ENCODE measurements at regions of chr5 and their contacts with region 1.

Region 1: DNA sequence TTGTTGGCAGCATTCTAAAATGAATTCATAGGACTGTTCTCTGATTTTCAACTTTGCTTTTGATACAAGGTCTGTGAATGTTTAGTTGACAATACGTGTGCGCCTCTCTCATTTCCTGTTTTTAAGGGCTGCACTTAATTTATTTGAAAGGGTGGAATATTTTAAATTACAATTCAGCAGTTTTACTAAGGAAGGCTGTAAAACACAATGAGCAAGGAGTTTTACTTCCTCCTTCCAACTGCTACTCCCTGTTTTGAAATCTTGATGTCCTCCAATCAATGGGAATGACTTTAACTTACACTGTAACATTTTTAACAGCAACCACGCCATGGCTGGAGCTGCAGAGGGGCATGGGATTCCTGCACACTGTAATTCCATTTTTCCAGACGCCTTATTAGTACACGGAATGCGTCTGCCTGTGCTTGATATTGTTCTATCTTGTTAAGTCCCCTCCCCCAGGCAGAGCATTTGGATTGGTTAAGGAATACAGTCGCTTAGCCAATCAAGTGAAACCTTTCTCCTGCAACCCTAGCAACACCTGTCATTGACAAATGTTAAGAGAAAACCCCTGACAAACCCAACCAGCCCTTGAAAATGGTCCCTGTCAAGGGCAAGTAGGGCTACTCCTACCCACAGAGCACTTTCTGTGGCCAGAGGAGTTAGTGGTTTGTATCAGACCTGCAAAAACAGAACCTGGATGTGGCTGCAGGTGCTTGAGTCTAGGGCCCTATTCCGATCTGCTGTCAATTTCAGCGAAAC is 12.5 kb upstream of the ZSWIM6 start:
- ATAC-seq: peak in 6 of 8 experiments; percentile 53 to 96 (median 85)
- H3K4me3 ChIP-seq: no peak overlapping the region
- H3K27ac ChIP-seq: no peak overlapping the region
- H3K4me1 ChIP-seq: peaks cover 0 to 10% of the 10 kb centered on the region in 2 donors

Region 2: GRCh38 chr5:60960591-60960990 is 359.0 kb before region 1 on chr5:
- in situ Hi-C with region 1: loop called in 1 of 9 experiments (anchors 25 kb)
- ATAC-seq: no peak
- H3K4me3 ChIP-seq: no peak overlapping the region
- H3K27ac ChIP-seq: no peak overlapping the region
- H3K4me1 ChIP-seq: no peaks in the 10 kb centered on the region

Region 3: DNA sequence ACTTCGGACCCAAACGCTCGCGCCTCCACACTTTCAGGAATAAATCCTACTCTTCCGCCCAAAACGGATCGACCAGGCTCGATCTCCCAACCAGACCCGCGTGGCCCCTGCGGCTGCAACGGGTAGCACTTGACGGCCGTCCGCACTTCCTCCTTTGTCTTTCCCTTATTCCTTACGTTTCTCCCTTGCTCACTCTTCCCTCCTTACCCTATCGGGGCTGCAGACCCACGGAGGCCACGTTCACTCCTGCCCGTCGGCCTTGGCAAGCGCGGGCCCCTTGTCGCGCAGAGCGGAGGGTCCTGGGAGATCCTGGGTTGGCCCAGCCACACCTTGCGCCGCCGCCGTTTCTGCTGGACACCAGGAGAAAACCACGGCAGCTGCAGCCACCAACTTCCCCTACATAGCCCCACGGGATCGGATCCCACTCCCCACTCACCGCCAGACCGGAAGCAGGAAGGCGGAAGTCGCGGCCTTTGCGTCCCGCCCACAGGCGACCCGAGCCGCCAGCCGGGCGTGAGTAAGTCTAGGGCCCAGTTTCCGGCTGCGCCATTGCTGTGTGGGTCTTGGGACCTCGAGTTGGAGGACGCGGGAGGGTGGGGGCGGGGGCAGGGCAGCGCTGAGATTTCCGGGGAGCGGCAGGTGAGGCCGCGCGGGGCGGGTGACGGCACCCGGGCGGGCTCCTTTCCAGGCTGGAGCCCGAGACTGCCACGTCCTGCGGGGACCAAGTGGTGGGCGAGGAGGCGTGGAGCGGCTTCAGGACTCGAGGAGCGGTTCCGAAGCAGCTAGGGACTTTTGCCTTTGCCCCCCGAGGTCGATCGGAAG is 157.3 kb before region 1 on chr5 and contains the start of gene SMIM15:
- in situ Hi-C with region 1: loop called in 3 of 9 experiments (anchors 10 to 25 kb)
- ATAC-seq: peak; percentile 92 to 98 (median 96)
- H3K4me3 ChIP-seq: peak within 1 kb of the TSS; percentile 58 to 95 (median 87)
- H3K27ac ChIP-seq: peak within 1 kb of the TSS; percentile 91 to 96
- H3K4me1 ChIP-seq: peaks cover 9 to 24% of the 10 kb centered on the region in 2 donors
- total RNA-seq, gene SMIM15: 24.7 to 40.8 (median 36.6) TPM

Region 4: GRCh38 chr5:61408476-61409168 is 89.1 kb after region 1 on chr5:
- in situ Hi-C with region 1: no loop called
- ATAC-seq: peak; percentile 98 to 100 (median 100)
- H3K4me3 ChIP-seq: peak overlapping the region; percentile 2 to 17 (median 11)
- H3K27ac ChIP-seq: no peak overlapping the region
- H3K4me1 ChIP-seq: peaks cover 10 to 22% of the 10 kb centered on the region in 2 donors

Region 5: GRCh38 chr5:61467766-61468482 is 148.4 kb after region 1 on chr5:
- in situ Hi-C with region 1: no loop called
- ATAC-seq: peak in 6 of 8 experiments; percentile 46 to 89 (median 62)
- H3K4me3 ChIP-seq: no peak overlapping the region
- H3K27ac ChIP-seq: no peak overlapping the region
- H3K4me1 ChIP-seq: peaks cover 0 to 9% of the 10 kb centered on the region in 2 donors